Psoas muscle (tissue), 8 donors: ENCODE measurements at regions of chr12 and their contacts with region 1.

Region 1: DNA sequence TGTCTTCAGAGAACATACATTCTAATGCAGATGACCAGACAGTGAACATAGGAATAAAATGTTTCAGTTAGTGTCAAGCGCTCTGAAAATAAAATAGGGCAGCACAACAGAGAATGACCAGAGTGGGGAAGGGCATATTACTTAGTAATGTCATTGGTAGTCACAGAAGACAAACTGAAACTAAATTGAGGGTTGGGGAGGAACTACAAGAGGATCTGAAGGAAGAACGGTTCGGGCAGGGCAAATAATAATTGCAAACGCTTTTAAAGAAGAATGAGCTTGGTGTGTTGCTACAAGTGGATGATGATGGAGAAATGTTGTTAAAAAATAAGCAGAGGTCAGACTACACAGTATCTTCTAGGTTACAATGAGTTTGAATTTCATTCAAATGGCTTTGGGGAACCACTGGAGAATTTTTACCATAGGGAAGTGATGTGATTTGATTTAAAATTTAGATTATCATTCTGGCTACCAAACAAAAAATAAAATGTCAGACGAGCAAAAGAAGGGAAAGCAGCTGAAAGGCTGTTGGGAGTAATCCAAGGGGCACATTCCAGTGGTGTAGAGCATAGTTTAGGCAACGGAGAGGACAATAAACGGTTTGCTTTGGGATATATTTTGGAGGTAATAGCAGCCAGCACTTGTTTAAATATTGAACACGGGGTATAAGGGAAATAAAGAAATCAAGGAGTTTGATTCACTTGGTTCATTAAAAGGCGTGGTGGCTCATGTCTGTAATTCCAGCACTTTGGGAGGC is 56.3 kb upstream of the SLC6A13 start:
- DNase-seq: no peak
- ATAC-seq: no peak
- H3K4me3 ChIP-seq: no peak overlapping the region
- H3K27ac ChIP-seq: no peak overlapping the region
- H3K4me1 ChIP-seq: no peaks in the 10 kb centered on the region
- H3K27me3 ChIP-seq: no peaks in the 10 kb centered on the region
- CTCF ChIP-seq: no peak

Region 2: DNA sequence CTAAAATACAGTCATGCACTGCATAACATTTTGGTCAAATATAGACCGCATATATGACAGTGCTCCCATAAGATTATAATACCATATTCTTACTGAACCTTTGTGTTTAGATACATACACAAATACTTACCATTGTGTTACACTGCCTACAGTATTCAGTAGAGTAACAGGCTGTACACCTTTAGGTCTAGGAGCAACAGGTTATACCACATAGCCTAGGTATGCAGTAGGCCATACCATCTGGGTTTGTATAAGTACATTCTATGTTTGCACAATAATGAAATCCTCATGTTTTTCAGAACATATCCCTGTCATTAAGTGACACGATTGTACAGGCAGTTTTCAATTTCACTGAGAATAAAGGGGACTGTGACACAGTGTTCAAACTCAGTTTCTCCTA is 47.9 kb after region 1 on chr12:
- intact Hi-C with region 1: loop called in 1 of 2 experiments (anchors 10 kb)
- DNase-seq: no peak
- ATAC-seq: no peak
- H3K4me3 ChIP-seq: no peak overlapping the region
- H3K27ac ChIP-seq: no peak overlapping the region
- H3K4me1 ChIP-seq: no peaks in the 10 kb centered on the region
- H3K27me3 ChIP-seq: no peaks in the 10 kb centered on the region
- CTCF ChIP-seq: no peak

Region 3: GRCh38 chr12:607526-608001 is 288.6 kb after region 1 on chr12:
- intact Hi-C with region 1: no loop called
- DNase-seq: peak; percentile 50 to 61
- ATAC-seq: peak; percentile 34 to 42 (median 38)
- H3K4me3 ChIP-seq: no peak overlapping the region
- H3K27ac ChIP-seq: peak overlapping the region; percentile 48
- H3K4me1 ChIP-seq: peaks cover 12% of the 10 kb centered on the region
- H3K27me3 ChIP-seq: no peaks in the 10 kb centered on the region
- CTCF ChIP-seq: no peak

Region 4: DNA sequence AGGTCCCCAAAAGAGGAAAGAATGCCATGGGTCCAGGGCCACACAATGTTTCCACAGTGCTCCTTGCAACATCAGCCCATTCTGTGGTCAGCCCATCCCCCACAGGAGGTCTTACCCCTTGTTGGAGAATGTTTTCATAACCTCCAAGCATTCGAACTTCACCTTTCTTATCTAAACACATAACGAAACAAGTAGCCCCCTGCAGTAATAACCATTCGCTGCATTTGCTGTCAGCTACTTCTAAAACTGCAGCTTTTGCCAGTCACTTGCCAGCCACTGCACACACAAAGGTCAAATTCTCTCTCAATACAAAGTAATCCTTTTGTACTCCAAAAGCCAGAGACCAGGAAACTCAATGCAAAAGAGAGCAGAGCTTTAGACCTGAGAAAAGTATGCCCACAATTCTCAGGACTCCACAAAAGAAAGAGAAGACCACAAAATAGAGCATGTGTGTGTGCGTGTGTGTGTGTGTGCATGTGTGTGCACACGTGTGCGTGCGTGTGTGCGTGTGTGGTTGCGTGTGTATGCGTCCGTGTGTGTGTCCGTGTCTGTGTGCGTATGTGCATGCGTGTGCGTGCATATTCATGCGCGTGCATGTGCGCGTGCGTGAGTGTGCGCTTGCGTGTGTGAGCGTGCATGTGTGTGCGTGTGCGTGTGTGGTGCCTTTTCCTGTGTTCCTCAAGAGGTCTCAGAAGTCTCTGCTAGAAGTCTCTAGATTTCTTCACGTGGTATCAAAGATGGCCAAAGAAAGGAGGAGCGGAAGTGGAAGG is 376.0 kb after region 1 on chr12:
- intact Hi-C with region 1: no loop called
- DNase-seq: no peak
- ATAC-seq: no peak
- H3K4me3 ChIP-seq: no peak overlapping the region
- H3K27ac ChIP-seq: no peak overlapping the region
- H3K4me1 ChIP-seq: no peaks in the 10 kb centered on the region
- H3K27me3 ChIP-seq: no peaks in the 10 kb centered on the region
- CTCF ChIP-seq: no peak